Ovary (tissue), 10 donors: ENCODE measurements at regions of chr9 and their contacts with region 1.

Region 1: DNA sequence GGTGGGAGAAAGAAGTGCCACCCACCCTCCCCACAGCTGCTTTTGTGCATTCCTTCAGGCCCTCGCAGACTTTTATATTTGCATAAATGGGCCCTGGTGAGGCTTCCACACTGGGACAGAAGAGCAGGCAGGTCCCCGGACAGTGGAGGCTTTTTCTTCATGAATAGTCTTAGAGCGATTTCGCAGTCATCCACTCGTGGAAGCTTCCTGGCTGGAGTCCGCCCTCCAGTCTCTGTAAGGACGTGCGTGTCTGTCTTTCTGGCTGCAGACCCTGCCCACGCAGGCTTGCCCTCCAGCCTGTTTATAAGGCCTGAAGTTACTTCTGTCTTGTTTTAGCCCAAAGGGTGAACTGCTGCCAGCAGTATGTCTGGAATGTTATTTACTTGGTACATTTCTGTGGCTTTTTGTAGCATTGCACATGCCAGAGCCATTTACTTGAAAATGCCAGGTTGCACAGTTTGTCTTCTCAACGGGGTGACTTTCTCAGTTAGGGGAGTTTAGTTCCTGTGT is 195.7 kb downstream of the AOPEP start:
- DNase-seq: peak in 4 of 5 donors; percentile 46 to 72 (median 48)
- H3K4me3 ChIP-seq: no peak overlapping the region
- H3K27ac ChIP-seq: peak overlapping the region; percentile 57 to 80
- H3K4me1 ChIP-seq: peaks cover 34% of the 10 kb centered on the region
- H3K27me3 ChIP-seq: no peaks in the 10 kb centered on the region
- CTCF ChIP-seq: no peak
- EP300 ChIP-seq: no peak
- POLR2A ChIP-seq: no peak

Region 2: GRCh38 chr9:94603259-94604160 is 318.6 kb before region 1 on chr9:
- intact Hi-C with region 1: no loop called
- DNase-seq: peak; percentile 29 to 63 (median 38)
- H3K4me3 ChIP-seq: no peak overlapping the region
- H3K27ac ChIP-seq: no peak overlapping the region
- H3K4me1 ChIP-seq: peaks cover 2% of the 10 kb centered on the region
- H3K27me3 ChIP-seq: no peaks in the 10 kb centered on the region
- CTCF ChIP-seq: no peak
- EP300 ChIP-seq: no peak
- POLR2A ChIP-seq: no peak

Region 3: GRCh38 chr9:94785215-94786169 is 136.7 kb before region 1 on chr9:
- intact Hi-C with region 1: no loop called
- DNase-seq: no peak
- H3K4me3 ChIP-seq: no peak overlapping the region
- H3K27ac ChIP-seq: no peak overlapping the region
- H3K4me1 ChIP-seq: peaks cover 3% of the 10 kb centered on the region
- H3K27me3 ChIP-seq: no peaks in the 10 kb centered on the region
- CTCF ChIP-seq: no peak
- EP300 ChIP-seq: no peak
- POLR2A ChIP-seq: no peak

Region 4: DNA sequence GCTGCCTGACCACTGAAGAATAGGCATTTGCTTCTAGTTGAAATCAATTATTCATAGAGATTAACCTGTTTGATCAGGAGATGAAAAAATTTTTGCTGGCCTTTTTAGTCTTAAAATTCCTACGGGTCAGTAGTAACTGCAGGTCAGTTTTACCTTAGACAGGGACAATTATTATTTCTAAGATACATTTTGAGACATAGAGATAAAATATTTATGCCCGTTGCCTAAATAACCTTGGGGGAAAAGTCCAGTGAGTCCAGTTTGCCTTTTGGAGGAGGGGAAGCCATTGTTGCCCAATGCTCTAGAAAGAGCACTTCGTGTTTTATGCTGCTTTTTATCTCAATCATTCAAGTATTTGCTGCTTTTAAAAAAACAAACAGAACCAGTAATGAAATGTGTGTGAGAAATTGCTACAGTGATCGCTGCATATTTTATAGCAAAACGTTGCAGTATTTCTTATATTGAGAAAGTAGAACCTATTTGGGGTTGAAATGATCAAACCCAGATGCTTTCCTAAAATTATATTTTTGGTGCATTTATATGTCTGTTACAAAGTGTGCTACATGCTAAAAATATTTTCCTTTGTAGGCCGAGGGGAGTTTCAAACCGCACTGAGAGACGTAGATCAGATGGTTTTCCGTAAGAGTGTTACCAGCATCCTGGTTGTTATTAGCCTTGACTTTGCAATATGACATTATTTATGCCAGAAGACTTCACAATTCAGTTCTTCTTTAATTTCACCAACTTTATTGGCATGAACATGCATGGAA is 71.1 kb after region 1 on chr9:
- intact Hi-C with region 1: loop called in 1 of 4 experiments (anchors 10 kb)
- DNase-seq: no peak
- H3K4me3 ChIP-seq: peak overlapping the region; percentile 0
- H3K27ac ChIP-seq: peak overlapping the region; percentile 54 to 77
- H3K4me1 ChIP-seq: peaks cover 19% of the 10 kb centered on the region
- H3K27me3 ChIP-seq: no peaks in the 10 kb centered on the region
- CTCF ChIP-seq: no peak
- EP300 ChIP-seq: no peak
- POLR2A ChIP-seq: no peak